Prostate gland (tissue), 2 donors: ENCODE measurements at regions of chr18 and their contacts with region 1.

Region 1: GRCh38 chr18:23812546-23813440 is 123.5 kb downstream of the LAMA3 start:
- DNase-seq: no peak
- H3K4me3 ChIP-seq: no peak overlapping the region
- H3K27ac ChIP-seq: no peak overlapping the region
- H3K4me1 ChIP-seq: no peaks in the 10 kb centered on the region
- H3K27me3 ChIP-seq: no peaks in the 10 kb centered on the region
- CTCF ChIP-seq: peak; percentile 14 to 65 (median 52)
- POLR2A ChIP-seq: no peak

Region 2: DNA sequence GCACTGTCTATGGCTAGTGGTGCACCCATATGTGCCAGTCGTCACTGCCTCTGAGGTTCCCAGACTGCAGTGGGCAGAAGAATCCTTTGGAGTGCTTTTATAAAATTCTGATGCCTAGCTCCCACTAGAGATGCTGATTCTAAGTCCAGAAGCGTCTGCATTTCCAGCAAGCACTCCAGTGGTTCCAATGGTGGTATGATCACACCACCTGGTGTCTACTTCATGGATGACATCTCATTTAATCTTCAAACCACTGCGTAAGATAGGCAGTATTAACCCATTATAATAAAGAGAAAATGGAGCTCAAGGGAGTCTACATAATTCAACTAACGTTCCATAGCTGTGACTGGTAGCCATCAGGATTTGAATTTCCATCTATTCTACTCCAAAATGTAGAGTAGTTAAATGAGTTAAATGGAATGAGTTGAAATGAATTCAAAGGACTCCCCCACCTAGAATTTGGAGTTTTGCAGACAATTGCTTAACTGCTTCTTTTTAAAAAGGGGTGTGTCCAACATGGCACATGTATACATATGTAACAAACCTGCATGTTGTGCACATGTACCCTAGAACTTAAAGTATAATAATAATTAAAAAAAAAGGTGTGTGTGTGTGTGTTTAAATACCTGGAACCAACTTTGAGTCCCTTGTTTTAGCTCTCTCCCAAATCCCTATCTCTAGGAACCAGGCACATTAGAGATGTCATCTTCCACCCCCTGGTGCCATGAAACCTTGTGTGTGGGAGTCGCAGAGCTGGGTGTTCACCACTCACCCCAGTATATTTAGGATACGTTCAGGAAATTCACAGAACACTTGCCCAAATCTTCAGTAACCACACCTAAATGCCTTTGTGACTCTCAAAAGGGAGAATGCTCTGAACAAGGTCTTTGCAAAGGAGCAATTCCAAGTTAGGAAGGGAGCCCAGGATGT is 109.5 kb before region 1 on chr18:
- intact Hi-C with region 1: loop called (anchors 5 kb)
- DNase-seq: peak; percentile 57
- H3K4me3 ChIP-seq: no peak overlapping the region
- H3K27ac ChIP-seq: no peak overlapping the region
- H3K4me1 ChIP-seq: no peaks in the 10 kb centered on the region
- H3K27me3 ChIP-seq: no peaks in the 10 kb centered on the region
- CTCF ChIP-seq: peak in 3 of 4 experiments; percentile 59 to 84 (median 82)
- POLR2A ChIP-seq: no peak